ENCODE measurements at regions of chr4 and their contacts with region 1.

Region 1: DNA sequence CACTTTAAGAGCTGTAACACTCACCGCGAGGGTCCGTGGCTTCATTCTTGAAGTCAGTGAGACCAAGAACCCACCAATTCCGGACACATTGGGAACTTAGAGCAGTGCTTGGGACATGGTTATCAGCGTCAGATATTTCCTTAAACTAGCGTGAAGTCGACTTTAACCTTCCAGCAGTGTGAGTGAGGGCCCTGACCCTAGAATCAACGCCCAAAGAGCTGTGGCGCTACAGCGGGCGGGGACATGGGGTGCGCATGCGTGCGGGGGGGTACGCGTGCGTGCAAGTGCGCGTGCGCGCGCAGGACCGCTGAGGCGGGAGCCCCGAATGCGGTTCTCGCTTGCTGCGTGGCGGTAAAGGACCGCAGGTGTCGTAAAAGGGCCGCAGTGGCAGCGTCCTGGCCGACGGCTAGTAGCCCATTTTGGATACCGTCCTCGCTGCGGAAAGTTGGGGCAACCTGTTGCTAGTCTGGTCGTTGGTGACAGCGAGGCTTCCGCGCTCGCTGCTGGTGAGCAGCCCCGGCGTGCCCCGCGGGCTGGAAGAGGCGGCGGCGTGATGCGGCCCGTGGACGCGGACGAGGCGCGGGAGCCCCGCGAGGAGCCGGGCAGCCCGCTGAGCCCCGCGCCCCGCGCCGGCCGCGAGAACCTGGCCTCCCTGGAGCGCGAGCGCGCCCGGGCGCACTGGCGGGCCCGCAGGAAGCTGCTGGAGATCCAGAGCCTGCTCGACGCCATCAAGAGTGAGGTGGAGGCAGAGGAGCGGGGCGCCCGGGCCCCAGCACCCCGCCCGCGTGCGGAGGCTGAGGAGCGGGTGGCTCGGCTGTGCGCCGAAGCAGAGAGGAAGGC is 19.8 kb upstream of the S100P start:
- DNase-seq: peak; percentile 75 to 98 (median 95)
- ATAC-seq: peak; percentile 80 to 86 (median 84)
- H3K4me3 ChIP-seq: peak overlapping the region; percentile 69 to 72
- H3K4me3 Mint-ChIP-seq: peak overlapping the region; percentile 89 to 93 (median 92)
- H3K27ac ChIP-seq: peak overlapping the region; percentile 81
- H3K27ac Mint-ChIP-seq: peak overlapping the region; percentile 97 to 98
- H3K4me1 ChIP-seq: peaks cover 26 to 45% of the 10 kb centered on the region in 2 experiments
- H3K4me1 Mint-ChIP-seq: peaks cover 46 to 52% (median 50%) of the 10 kb centered on the region in 3 donors
- H3K27me3 ChIP-seq: no peaks in the 10 kb centered on the region
- H3K27me3 Mint-ChIP-seq: no peaks in the 10 kb centered on the region

Region 2: DNA sequence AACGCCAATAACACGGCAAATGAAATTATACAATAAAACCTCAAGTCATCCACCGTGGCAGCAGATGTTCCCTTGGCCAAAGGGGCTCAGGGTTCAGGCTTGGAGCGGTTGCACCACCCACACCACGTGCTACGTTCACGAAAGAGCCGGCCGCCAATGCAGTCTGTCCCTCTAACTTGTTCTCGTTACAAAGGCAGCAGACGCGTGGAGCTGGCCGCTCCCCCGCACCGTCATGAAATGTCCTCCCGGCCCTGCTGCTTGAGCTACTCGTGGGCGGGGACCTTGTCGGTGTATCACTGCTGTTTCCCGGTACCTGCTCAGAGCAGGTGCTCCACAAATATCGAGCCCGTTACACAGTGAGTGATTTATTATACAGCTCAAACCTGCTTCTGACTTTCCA is 135.3 kb before region 1 on chr4:
- CTCF ChIA-PET with region 1: no interaction called
- POLR2A ChIA-PET with region 1: no interaction called
- DNase-seq: no peak
- ATAC-seq: no peak
- H3K4me3 ChIP-seq: no peak overlapping the region
- H3K4me3 Mint-ChIP-seq: no peak overlapping the region
- H3K27ac ChIP-seq: no peak overlapping the region
- H3K27ac Mint-ChIP-seq: no peak overlapping the region
- H3K4me1 ChIP-seq: no peaks in the 10 kb centered on the region
- H3K4me1 Mint-ChIP-seq: no peaks in the 10 kb centered on the region
- H3K27me3 ChIP-seq: peaks cover 0 to 30% of the 10 kb centered on the region in 2 experiments
- H3K27me3 Mint-ChIP-seq: peaks cover 22 to 32% of the 10 kb centered on the region in 2 donors

Region 3: DNA sequence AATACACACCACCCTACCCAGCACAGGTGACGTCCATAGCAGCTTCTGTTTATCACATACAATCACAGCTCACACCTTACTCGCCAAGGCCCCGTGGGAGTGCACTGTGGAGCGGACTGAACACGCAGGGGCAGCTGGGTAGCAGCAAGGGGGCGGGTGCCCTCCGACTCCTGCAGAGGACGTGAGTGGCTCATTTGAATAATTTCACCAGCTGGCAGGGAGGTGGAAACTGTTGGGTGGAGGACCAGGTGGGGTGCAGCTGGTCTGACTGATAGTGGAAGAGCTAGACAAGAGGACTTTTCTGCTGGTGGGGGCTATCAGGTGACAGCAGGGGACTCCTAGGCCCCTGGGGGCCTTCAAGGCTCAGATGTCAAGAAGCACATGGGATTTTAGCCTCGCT is 82.6 kb before region 1 on chr4:
- CTCF ChIA-PET with region 1: no interaction called
- POLR2A ChIA-PET with region 1: no interaction called
- DNase-seq: no peak
- ATAC-seq: no peak
- H3K4me3 ChIP-seq: no peak overlapping the region
- H3K4me3 Mint-ChIP-seq: no peak overlapping the region
- H3K27ac ChIP-seq: no peak overlapping the region
- H3K27ac Mint-ChIP-seq: no peak overlapping the region
- H3K4me1 ChIP-seq: no peaks in the 10 kb centered on the region
- H3K4me1 Mint-ChIP-seq: peaks cover 0 to 5% (median 0%) of the 10 kb centered on the region in 3 donors
- H3K27me3 ChIP-seq: no peaks in the 10 kb centered on the region
- H3K27me3 Mint-ChIP-seq: no peaks in the 10 kb centered on the region

Region 4: DNA sequence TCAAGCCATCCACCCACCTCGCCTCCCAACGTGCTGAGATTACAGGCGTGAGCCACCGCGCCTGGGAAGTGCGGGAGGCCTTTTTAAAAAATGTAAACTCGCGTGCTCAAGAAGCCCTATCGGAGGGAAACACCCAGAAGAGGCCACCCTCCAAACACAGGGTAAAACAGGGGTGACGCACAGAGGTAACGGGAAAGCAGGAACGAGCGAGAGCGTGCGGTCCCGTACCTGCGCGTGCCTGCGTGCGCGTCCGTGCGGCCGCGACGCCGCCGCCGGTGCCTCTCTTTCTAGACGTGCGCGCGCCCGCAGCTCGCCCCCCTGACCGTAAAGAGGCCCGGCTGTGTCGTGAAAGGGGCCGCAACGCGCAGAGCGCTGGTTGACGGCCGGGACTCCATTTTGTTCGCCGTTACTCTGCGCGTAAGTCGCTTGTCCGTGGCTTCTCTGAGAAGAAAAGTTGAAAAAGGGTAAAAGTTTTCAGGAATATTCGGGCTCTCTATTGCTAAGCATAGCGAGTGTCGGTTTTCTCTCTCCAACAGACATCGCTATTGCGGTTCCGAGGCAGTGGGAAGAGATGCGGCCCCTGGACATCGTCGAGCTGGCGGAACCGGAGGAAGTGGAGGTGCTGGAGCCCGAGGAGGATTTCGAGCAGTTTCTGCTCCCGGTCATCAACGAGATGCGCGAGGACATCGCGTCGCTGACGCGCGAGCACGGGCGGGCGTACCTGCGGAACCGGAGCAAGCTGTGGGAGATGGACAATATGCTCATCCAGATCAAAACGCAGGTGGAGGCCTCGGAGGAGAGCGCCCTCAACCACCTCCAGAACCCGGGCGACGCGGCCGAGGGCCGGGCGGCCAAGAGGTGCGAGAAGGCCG is 33.4 kb before region 1 on chr4 and contains the start of gene MRFAP1:
- CTCF ChIA-PET with region 1: interaction called, 5 to 11 read pairs
- POLR2A ChIA-PET with region 1: interaction called in 1 of 2 experiments, 10 read pairs
- DNase-seq: peak; percentile 89 to 98 (median 94)
- ATAC-seq: peak; percentile 83 to 88 (median 86)
- H3K4me3 ChIP-seq: peak within 1 kb of the TSS; percentile 70 to 96
- H3K4me3 Mint-ChIP-seq: peak within 1 kb of the TSS; percentile 99 to 100 (median 99)
- H3K27ac ChIP-seq: peak within 1 kb of the TSS; percentile 99
- H3K27ac Mint-ChIP-seq: peak within 1 kb of the TSS; percentile 98 to 99
- H3K4me1 ChIP-seq: peaks cover 12 to 29% of the 10 kb centered on the region in 2 experiments
- H3K4me1 Mint-ChIP-seq: peaks cover 37 to 50% (median 37%) of the 10 kb centered on the region in 3 donors
- H3K27me3 ChIP-seq: no peaks in the 10 kb centered on the region
- H3K27me3 Mint-ChIP-seq: no peaks in the 10 kb centered on the region
- total RNA-seq, gene MRFAP1: 138 to 169 (median 138) TPM

Region 5: GRCh38 chr4:6695660-6696630 is 22.1 kb after region 1 on chr4:
- CTCF ChIA-PET with region 1: interaction called, 4 to 52 read pairs
- POLR2A ChIA-PET with region 1: interaction called, 3 to 4 read pairs
- DNase-seq: peak; percentile 49 to 85 (median 66)
- ATAC-seq: peak; percentile 93 to 96 (median 95)
- H3K4me3 ChIP-seq: peak overlapping the region in 1 of 2 donors; percentile 33
- H3K4me3 Mint-ChIP-seq: peak overlapping the region; percentile 43 to 65 (median 49)
- H3K27ac ChIP-seq: peak overlapping the region; percentile 87
- H3K27ac Mint-ChIP-seq: peak overlapping the region; percentile 95 to 97
- H3K4me1 ChIP-seq: peaks cover 75 to 91% of the 10 kb centered on the region in 2 experiments
- H3K4me1 Mint-ChIP-seq: peaks cover 73 to 88% (median 84%) of the 10 kb centered on the region in 3 donors
- H3K27me3 ChIP-seq: no peaks in the 10 kb centered on the region
- H3K27me3 Mint-ChIP-seq: no peaks in the 10 kb centered on the region

Region 6: DNA sequence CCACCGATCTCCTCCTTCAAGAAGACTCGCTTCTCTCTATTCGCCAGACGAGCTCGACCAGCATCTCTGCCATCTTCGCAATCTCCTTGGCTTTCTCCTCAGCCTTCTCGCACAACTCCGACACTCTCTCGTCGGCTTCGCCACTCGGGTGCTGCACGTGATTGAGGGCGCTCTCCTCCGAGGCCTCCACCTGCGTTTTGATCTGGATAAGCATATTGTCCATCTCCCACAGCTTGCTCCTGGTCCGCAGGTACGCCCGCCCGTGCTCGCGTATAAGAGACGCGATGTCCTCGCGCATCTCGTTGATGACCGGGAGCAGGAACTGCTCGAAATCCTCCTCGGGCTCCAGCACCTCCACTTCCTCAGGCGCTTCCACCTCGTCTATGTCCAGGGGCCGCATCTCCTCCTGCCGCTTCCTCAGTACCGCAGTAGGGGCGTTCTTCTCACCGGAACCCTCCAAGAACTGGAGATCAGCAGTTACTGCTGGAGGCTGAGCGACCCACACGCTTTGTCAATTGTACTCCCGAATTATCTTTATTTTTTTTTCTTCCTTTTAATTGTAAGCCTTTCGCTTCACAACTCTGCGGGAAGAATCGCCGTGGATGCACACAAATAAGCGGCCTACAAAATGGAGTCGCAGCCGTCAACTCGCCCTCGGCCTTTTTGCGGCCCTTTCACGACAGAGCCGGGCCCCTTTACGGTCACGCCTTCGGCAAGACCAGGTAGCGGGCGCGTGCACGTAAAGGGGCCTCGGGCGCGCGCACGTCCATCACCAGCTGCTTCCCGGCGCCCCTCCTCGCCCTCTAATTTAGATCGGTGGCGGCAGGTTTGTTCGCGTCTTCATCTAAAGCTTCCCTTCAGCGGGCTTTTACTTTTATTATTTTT is 35.6 kb after region 1 on chr4 and contains the start of gene MRFAP1L1:
- CTCF ChIA-PET with region 1: interaction called, 10 to 48 read pairs
- POLR2A ChIA-PET with region 1: interaction called, 3 to 8 read pairs
- DNase-seq: peak; percentile 92 to 99 (median 97)
- ATAC-seq: peak; percentile 83 to 90 (median 86)
- H3K4me3 ChIP-seq: peak within 1 kb of the TSS; percentile 67 to 87
- H3K4me3 Mint-ChIP-seq: peak within 1 kb of the TSS; percentile 96 to 100 (median 97)
- H3K27ac ChIP-seq: peak within 1 kb of the TSS; percentile 71
- H3K27ac Mint-ChIP-seq: peak within 1 kb of the TSS; percentile 97 to 99
- H3K4me1 ChIP-seq: peaks cover 22 to 39% of the 10 kb centered on the region in 2 experiments
- H3K4me1 Mint-ChIP-seq: peaks cover 60 to 71% (median 62%) of the 10 kb centered on the region in 3 donors
- H3K27me3 ChIP-seq: no peaks in the 10 kb centered on the region
- H3K27me3 Mint-ChIP-seq: no peaks in the 10 kb centered on the region
- total RNA-seq, gene MRFAP1L1: 28.8 to 121 (median 112) TPM

Region 7: GRCh38 chr4:6873792-6874461 is 200.0 kb after region 1 on chr4:
- CTCF ChIA-PET with region 1: interaction called, 12 to 40 read pairs
- POLR2A ChIA-PET with region 1: no interaction called
- DNase-seq: peak; percentile 55 to 86 (median 75)
- ATAC-seq: peak; percentile 79 to 94 (median 88)
- H3K4me3 ChIP-seq: no peak overlapping the region
- H3K4me3 Mint-ChIP-seq: no peak overlapping the region
- H3K27ac ChIP-seq: no peak overlapping the region
- H3K27ac Mint-ChIP-seq: peak overlapping the region in 1 of 2 donors; percentile 34
- H3K4me1 ChIP-seq: peaks cover 0 to 3% of the 10 kb centered on the region in 2 experiments
- H3K4me1 Mint-ChIP-seq: peaks cover 5 to 7% (median 5%) of the 10 kb centered on the region in 3 donors
- H3K27me3 ChIP-seq: no peaks in the 10 kb centered on the region
- H3K27me3 Mint-ChIP-seq: no peaks in the 10 kb centered on the region